ENCODE measurements at regions of chr19 and their contacts with region 1.

Region 1: GRCh38 chr19:40489882-40490230 is 23.1 kb downstream of the SPTBN4 start:
- DNase-seq: no peak
- H3K4me3 ChIP-seq: no peak overlapping the region
- H3K27ac ChIP-seq: no peak overlapping the region
- H3K4me1 ChIP-seq: peaks cover 0 to 5% (median 0%) of the 10 kb centered on the region in 4 experiments; a peak in 1 of 7 replicates
- H3K27me3 ChIP-seq: peaks cover 0 to 3% (median 1%) of the 10 kb centered on the region in 4 experiments; a peak in 3 of 7 replicates
- CTCF ChIP-seq: no peak
- EP300 ChIP-seq: no peak
- POLR2A ChIP-seq: no peak
- RAD21 ChIP-seq: no peak

Region 2: DNA sequence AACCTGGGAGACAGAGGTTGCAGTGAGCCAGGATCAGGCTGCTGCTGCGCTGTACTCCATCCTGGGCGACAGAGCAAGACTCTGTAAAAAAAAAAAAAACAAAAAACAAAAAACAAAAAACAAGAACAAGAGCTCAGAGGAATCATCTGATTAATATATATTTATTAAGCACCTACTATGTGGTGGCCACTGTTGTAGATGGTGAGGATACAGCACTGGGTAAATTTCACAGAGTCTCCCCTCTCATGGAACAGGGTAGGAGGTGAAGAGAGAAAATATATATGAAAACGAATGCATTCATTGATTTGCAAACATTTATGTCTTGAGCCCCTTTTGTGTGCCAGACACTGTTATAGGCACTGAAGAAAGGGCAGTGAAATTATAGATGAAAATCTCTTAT is 58.2 kb before region 1 on chr19:
- CTCF ChIA-PET with region 1: no interaction called
- POLR2A ChIA-PET with region 1: no interaction called
- DNase-seq: no peak
- H3K4me3 ChIP-seq: no peak overlapping the region
- H3K27ac ChIP-seq: no peak overlapping the region
- H3K4me1 ChIP-seq: peaks cover 0 to 4% (median 3%) of the 10 kb centered on the region in 4 experiments; a peak in 4 of 7 replicates
- H3K27me3 ChIP-seq: no peaks in the 10 kb centered on the region
- CTCF ChIP-seq: no peak
- EP300 ChIP-seq: no peak
- POLR2A ChIP-seq: no peak
- RAD21 ChIP-seq: no peak

Region 3: GRCh38 chr19:40472516-40472915 is 17.3 kb before region 1 on chr19:
- CTCF ChIA-PET with region 1: interaction called, 11 read pairs
- POLR2A ChIA-PET with region 1: no interaction called
- DNase-seq: no peak
- H3K4me3 ChIP-seq: no peak overlapping the region
- H3K27ac ChIP-seq: no peak overlapping the region
- H3K4me1 ChIP-seq: no peaks in the 10 kb centered on the region
- H3K27me3 ChIP-seq: peaks cover 3 to 13% (median 7%) of the 10 kb centered on the region in 4 experiments
- CTCF ChIP-seq: no peak
- EP300 ChIP-seq: no peak
- POLR2A ChIP-seq: no peak
- RAD21 ChIP-seq: no peak

Region 4: GRCh38 chr19:40502647-40503319 is 12.9 kb after region 1 on chr19:
- CTCF ChIA-PET with region 1: interaction called, 11 read pairs
- POLR2A ChIA-PET with region 1: interaction called, 3 read pairs
- DNase-seq: peak in 1 of 2 experiments; percentile 17
- H3K4me3 ChIP-seq: no peak overlapping the region
- H3K27ac ChIP-seq: no peak overlapping the region
- H3K4me1 ChIP-seq: no peaks in the 10 kb centered on the region
- H3K27me3 ChIP-seq: peaks cover 0 to 6% (median 3%) of the 10 kb centered on the region in 4 experiments; a peak in 3 of 7 replicates
- CTCF ChIP-seq: peak; percentile 40 to 58 (median 40)
- EP300 ChIP-seq: no peak
- POLR2A ChIP-seq: no peak
- RAD21 ChIP-seq: peak; percentile 7 to 41; a peak in 3 of 4 replicates

Region 5: GRCh38 chr19:40570313-40571004 is 80.6 kb after region 1 on chr19:
- CTCF ChIA-PET with region 1: no interaction called
- POLR2A ChIA-PET with region 1: no interaction called
- DNase-seq: peak; percentile 99 to 100
- H3K4me3 ChIP-seq: peak overlapping the region; percentile 42 to 74 (median 45)
- H3K27ac ChIP-seq: no peak overlapping the region
- H3K4me1 ChIP-seq: peaks cover 2 to 13% (median 4%) of the 10 kb centered on the region in 4 experiments
- H3K27me3 ChIP-seq: peaks cover 32 to 49% (median 46%) of the 10 kb centered on the region in 4 experiments
- CTCF ChIP-seq: peak; percentile 42 to 62 (median 58)
- EP300 ChIP-seq: no peak
- POLR2A ChIP-seq: no peak
- RAD21 ChIP-seq: peak; percentile 17 to 36; a peak in 2 of 4 replicates